ENCODE measurements at regions of chr1 and their contacts with region 1.

Region 1: GRCh38 chr1:154961497-154962262 is at the start of gene PYGO2:
- DNase-seq: no peak
- H3K27ac ChIP-seq: peak within 1 kb of the TSS; percentile 100
- CTCF ChIP-seq: peak; percentile 77

Region 2: GRCh38 chr1:154973344-154974062 is 11.8 kb after region 1 on chr1:
- CTCF ChIA-PET with region 1: no interaction called
- POLR2A ChIA-PET with region 1: interaction called, 24 read pairs
- DNase-seq: peak; percentile 84
- H3K27ac ChIP-seq: peak overlapping the region; percentile 100
- CTCF ChIP-seq: no peak